ENCODE measurements at regions of chr21 and their contacts with region 1.

Region 1: GRCh38 chr21:43938751-43939442 is 73.2 kb upstream of the TRAPPC10 start:
- DNase-seq: peak; percentile 61 to 82
- ATAC-seq: peak; percentile 68 to 70
- H3K4me3 ChIP-seq: peak overlapping the region; percentile 43 to 50 (median 47)
- H3K27ac ChIP-seq: peak overlapping the region; percentile 70 to 98 (median 85)
- H3K4me1 ChIP-seq: peaks cover 33 to 56% of the 10 kb centered on the region in 2 donors
- H3K27me3 ChIP-seq: no peaks in the 10 kb centered on the region
- CTCF ChIP-seq: peak; percentile 91 to 97 (median 94)
- POLR2A ChIP-seq: peak in 1 of 2 donors; percentile 33

Region 2: GRCh38 chr21:43975495-43975993 is 36.6 kb after region 1 on chr21:
- in situ Hi-C with region 1: no loop called
- intact Hi-C with region 1: loop called (anchors 1 kb)
- DNase-seq: peak; percentile 47 to 78
- ATAC-seq: peak; percentile 44 to 60
- H3K4me3 ChIP-seq: no peak overlapping the region
- H3K27ac ChIP-seq: peak overlapping the region in 1 of 4 donors; percentile 15
- H3K4me1 ChIP-seq: peaks cover 0 to 16% of the 10 kb centered on the region in 2 donors
- H3K27me3 ChIP-seq: no peaks in the 10 kb centered on the region
- CTCF ChIP-seq: peak; percentile 90 to 96 (median 92)
- POLR2A ChIP-seq: no peak

Region 3: GRCh38 chr21:44000360-44000759 is 61.5 kb after region 1 on chr21:
- in situ Hi-C with region 1: no loop called
- intact Hi-C with region 1: no loop called
- DNase-seq: no peak
- ATAC-seq: no peak
- H3K4me3 ChIP-seq: no peak overlapping the region
- H3K27ac ChIP-seq: no peak overlapping the region
- H3K4me1 ChIP-seq: no peaks in the 10 kb centered on the region
- H3K27me3 ChIP-seq: no peaks in the 10 kb centered on the region
- CTCF ChIP-seq: no peak
- POLR2A ChIP-seq: no peak

Region 4: GRCh38 chr21:44593598-44594405 is 654.9 kb after region 1 on chr21:
- in situ Hi-C with region 1: no loop called
- intact Hi-C with region 1: no loop called
- DNase-seq: no peak
- ATAC-seq: no peak
- H3K4me3 ChIP-seq: no peak overlapping the region
- H3K27ac ChIP-seq: no peak overlapping the region
- H3K4me1 ChIP-seq: no peaks in the 10 kb centered on the region
- H3K27me3 ChIP-seq: peaks cover 19 to 47% (median 26%) of the 10 kb centered on the region in 3 donors
- CTCF ChIP-seq: no peak
- POLR2A ChIP-seq: no peak

Measured in gastrocnemius medialis (tissue), 4 donors.